ENCODE measurements at regions of chr1 and their contacts with region 1.

Region 1: DNA sequence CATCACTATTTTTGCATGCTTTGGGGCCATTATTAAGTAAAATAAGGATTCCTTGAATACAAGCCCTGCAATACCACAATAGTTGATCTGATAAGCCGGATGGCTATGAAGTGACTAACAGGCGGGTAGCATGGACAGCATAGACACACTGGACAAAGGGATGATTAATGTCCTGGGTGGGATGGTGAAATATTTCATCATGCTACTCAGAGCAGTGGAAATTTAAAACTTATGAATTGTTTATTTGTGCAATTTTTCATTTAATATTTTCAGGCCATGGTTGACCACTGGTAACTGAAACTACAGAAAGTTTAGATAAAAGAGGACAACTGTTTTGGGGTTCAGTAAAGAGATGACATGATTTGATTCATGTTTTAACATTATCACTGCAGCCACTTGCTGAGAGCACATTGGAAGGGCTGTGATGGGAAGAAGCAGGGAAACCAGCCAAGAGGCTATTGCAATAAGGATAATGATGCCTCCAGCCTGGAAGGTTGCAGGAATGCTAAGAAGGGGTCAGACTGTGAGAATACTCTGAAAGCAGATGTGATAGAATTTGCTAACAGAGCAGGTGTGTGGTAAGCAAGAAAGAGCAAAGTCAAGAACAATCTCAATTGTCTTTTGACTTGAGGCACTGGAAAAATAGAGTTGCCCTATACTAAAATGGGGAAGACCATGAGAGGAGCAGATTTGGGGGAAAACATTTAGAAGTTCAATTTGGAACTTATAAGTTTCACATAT is 62.5 kb upstream of the TNFSF4 start:
- DNase-seq: no peak
- H3K4me3 Mint-ChIP-seq: no peak overlapping the region
- H3K27ac Mint-ChIP-seq: no peak overlapping the region
- H3K4me1 Mint-ChIP-seq: peaks cover 3% of the 10 kb centered on the region
- H3K27me3 Mint-ChIP-seq: no peaks in the 10 kb centered on the region

Region 2: GRCh38 chr1:173224949-173225348 is 44.7 kb before region 1 on chr1:
- CTCF ChIA-PET with region 1: no interaction called
- intact Hi-C with region 1: loop called (anchors 5 kb)
- DNase-seq: no peak
- H3K4me3 Mint-ChIP-seq: no peak overlapping the region
- H3K27ac Mint-ChIP-seq: no peak overlapping the region
- H3K4me1 Mint-ChIP-seq: peaks cover 7% of the 10 kb centered on the region
- H3K27me3 Mint-ChIP-seq: no peaks in the 10 kb centered on the region

Measured in activated naive CD4-positive, alpha-beta T cell treated with anti-CD3 and anti-CD28 coated beads for 36 hours (primary cell).